AG04450 (cell line): ENCODE measurements at regions of chr1 and their contacts with region 1.

Region 1: GRCh38 chr1:181142096-181142958 is 53.8 kb downstream of the IER5 start:
- DNase-seq: peak; percentile 81
- H3K4me3 ChIP-seq: peak overlapping the region; percentile 36
- H3K27ac ChIP-seq: peak overlapping the region; percentile 43
- H3K27me3 ChIP-seq: peaks cover 6% of the 10 kb centered on the region
- CTCF ChIP-seq: peak; percentile 97

Region 2: GRCh38 chr1:180863158-180863775 is 279.1 kb before region 1 on chr1:
- CTCF ChIA-PET with region 1: interaction called, 12 read pairs
- POLR2A ChIA-PET with region 1: no interaction called
- DNase-seq: peak; percentile 26
- H3K4me3 ChIP-seq: no peak overlapping the region
- H3K27ac ChIP-seq: no peak overlapping the region
- H3K27me3 ChIP-seq: no peaks in the 10 kb centered on the region
- CTCF ChIP-seq: peak; percentile 62

Region 3: GRCh38 chr1:180975551-180975950 is 166.8 kb before region 1 on chr1:
- CTCF ChIA-PET with region 1: interaction called, 12 read pairs
- POLR2A ChIA-PET with region 1: no interaction called
- DNase-seq: no peak
- H3K4me3 ChIP-seq: no peak overlapping the region
- H3K27ac ChIP-seq: no peak overlapping the region
- H3K27me3 ChIP-seq: no peaks in the 10 kb centered on the region
- CTCF ChIP-seq: no peak

Region 4: DNA sequence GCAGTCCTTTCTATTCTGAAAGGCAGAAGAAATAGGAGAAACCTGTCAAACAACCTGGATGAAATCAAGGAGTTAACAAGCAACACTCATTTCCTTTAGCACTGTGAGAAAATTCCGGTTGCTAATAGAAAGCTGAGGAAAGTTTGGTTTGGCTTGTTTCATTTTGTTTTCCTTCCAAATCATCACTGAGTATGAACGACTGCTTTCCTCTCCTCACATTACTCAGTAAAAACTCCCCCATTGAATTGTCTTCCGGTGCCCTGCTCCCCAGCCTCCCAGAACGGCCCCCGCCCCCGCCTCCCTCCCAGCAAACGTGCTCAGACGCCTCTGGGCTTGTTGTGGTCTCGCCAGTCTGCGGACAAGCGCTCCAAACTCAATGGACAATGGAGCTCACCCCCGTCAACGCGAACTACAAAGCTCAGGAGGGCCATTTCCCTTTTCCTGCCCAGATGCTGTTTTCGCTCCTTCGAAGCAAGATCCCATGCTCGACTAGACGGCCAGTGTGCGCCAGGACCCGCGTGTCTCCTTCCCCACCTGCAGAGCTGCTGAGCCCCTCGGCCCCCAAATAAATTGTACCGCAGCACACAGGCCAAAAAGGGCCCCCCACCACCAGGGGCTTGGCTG is 120.4 kb before region 1 on chr1:
- CTCF ChIA-PET with region 1: interaction called, 14 read pairs
- POLR2A ChIA-PET with region 1: interaction called, 3 read pairs
- DNase-seq: peak; percentile 24
- H3K4me3 ChIP-seq: peak overlapping the region; percentile 96
- H3K27ac ChIP-seq: peak overlapping the region; percentile 70
- H3K27me3 ChIP-seq: no peaks in the 10 kb centered on the region
- CTCF ChIP-seq: no peak

Region 5: DNA sequence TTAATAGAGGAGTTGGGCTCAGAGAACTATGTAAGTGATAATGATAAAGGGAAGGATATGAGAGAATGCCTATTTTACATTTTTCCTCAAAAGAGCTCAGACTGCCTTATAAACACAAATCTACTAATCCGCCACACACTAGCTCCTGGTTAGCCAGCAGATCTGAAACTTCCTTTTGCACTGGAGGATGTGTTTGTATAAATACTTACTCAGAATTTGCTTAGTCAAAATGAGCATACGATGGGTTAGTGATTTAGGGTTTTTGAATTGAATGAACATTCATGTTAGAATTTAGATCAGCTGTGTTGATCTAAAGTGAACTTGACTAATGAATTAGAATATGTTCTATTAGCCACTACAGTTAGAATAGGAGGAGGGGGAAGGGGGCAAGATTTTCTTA is 62.9 kb before region 1 on chr1:
- CTCF ChIA-PET with region 1: interaction called, 13 read pairs
- POLR2A ChIA-PET with region 1: interaction called, 4 read pairs
- DNase-seq: peak; percentile 18
- H3K4me3 ChIP-seq: no peak overlapping the region
- H3K27ac ChIP-seq: peak overlapping the region; percentile 31
- H3K27me3 ChIP-seq: no peaks in the 10 kb centered on the region
- CTCF ChIP-seq: no peak

Region 6: DNA sequence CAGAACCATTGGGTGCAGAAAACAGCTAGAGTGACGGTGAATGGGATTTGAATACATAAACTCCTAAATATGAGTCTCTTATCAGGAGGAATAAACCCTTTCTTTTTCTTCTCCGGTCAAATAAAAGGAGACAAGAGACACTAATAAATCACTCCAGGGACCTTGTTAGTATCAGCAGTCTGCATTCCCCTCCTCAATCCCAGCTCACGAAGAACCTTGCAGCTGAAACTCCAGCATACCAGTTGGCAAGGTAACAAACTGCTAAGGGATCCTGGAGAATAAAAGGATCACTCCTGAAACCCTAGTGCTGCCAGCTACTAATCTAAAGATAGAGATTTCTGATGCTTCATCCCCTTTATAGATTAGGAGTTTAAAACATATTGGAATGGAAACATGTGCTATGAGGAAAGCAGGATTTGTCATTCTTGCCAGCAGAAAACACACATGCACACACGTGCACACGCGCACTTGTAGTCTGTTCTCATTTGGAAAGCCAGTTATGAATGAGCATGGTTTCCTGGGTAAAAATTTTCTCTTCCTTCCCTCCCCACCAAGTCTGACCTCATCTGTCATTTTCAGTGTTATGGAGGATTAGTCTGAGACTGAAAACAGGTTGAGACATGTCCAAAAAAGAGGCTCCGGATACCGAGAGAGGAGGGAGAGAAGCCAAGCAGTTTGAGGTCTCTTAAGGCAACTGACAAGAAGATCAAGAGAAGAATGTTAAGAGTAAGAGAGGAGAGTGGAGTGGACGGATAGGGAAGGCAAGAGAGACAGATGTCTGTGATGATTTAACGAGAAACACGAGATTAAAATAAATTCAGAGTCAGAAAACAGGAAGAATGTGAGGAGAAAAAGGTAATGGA is 42.9 kb before region 1 on chr1:
- CTCF ChIA-PET with region 1: interaction called, 34 read pairs
- POLR2A ChIA-PET with region 1: interaction called, 24 read pairs
- DNase-seq: no peak
- H3K4me3 ChIP-seq: no peak overlapping the region
- H3K27ac ChIP-seq: peak overlapping the region; percentile 22
- H3K27me3 ChIP-seq: no peaks in the 10 kb centered on the region
- CTCF ChIP-seq: no peak

Region 7: GRCh38 chr1:181152892-181153633 is 10.7 kb after region 1 on chr1:
- CTCF ChIA-PET with region 1: interaction called, 34 read pairs
- POLR2A ChIA-PET with region 1: interaction called, 9 read pairs
- DNase-seq: peak; percentile 78
- H3K4me3 ChIP-seq: no peak overlapping the region; the same call in 1 of the 2 replicates
- H3K27ac ChIP-seq: peak overlapping the region; percentile 62
- H3K27me3 ChIP-seq: no peaks in the 10 kb centered on the region
- CTCF ChIP-seq: peak; percentile 53

Region 8: DNA sequence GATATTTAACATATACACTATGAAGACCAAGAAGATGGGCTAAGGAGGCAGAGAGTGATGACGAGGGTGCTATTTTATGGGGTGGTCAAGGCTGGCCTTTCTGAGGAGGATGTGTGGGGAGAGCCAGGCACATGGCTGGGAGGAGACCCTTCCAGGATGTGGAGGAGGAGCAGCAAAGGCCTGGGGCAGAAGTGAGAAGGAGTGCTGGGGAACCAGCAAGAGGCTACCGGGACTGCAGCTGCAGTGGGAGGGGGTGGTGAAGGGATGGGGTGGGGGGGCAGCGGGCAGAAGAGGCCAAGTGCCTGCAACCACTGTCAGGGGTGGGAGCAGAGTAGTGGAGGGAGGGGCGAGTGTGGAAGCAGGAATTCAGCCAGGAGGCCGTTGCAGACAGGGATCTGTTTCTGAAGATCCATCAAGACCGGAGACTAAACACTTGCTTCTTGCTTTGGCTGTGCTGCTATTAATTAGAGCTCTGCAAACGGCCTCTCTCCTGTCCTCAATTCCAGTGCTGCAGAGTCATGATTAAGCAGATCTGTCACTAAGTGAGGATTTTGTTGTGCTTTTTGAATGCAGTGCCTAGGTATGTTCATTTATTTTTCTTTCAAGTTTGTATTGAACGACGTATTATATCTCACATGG is 36.0 kb after region 1 on chr1:
- CTCF ChIA-PET with region 1: no interaction called
- POLR2A ChIA-PET with region 1: no interaction called
- DNase-seq: no peak
- H3K4me3 ChIP-seq: no peak overlapping the region
- H3K27ac ChIP-seq: no peak overlapping the region
- H3K27me3 ChIP-seq: peaks cover 14% of the 10 kb centered on the region
- CTCF ChIP-seq: no peak